Right ventricle myocardium inferior (tissue), 1 donor: ENCODE measurements at regions of chr22 and their contacts with region 1.

Region 1: DNA sequence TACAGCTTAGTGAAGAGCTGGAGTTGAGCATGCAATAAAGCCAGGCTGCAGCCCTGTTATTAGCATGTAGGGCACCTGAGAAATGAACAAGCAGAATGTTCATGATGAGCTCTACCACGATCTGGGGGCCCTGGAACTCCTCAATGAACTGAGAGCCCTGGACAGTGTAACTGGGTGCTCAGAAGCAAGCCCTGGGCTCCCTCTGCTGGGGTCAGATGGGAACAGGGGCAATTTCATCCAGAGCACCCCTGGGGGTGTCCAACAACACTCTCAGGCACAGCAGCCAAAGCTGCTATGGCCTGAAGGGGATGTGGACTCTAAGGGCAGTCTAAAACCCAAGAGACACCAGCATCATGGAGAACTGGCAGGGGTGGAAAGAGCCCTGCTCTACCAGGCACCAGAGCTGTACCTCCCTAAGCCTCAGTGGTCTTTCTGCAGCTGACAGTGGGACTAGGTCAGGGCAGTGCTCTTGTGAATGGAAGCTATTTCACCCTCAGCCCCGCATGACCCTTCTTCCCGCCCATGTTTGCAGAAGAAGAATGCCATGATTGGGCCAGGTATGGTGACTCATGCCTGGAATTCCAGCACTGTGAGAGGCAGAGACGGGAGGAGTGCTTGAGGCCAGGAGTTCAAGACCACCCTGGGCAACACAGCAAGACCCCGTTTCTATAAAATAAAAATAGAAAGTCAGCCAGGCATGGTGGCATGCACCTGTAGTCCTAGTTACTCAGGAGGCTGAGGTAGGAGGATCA is 28.9 kb downstream of the THOC5 start:
- DNase-seq: no peak
- ATAC-seq: peak; percentile 72

Region 2: DNA sequence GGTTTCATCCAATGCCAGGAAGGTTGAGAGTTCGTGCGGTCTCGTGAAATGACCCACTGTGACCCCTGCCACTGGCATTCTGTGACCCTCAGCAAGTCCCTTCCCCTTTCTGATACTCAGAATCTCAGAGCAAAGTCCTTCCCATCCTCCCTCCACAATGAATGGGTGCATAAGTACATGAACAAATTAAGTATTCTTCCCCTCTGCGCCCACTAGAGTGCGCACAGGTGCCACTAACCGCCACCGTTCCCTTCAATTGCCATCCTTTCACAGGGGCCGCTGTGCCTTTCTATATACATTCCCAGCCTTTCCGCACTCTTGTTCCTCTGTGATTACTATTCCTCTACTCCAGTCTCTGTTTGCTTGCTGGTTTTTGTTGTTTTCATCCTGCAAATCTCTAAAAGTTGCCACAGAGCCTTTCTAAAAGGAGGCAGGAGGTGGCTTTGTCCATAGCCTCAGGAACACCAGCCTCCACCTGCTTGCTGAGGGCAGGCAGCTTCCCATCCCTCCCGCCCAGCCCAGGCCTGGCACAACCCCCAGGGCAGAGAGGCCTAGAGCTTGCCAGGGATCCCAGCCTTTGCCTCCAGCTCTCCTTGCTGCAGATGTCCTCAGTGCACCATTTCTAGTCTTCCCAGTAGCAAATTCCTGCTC is 129.6 kb before region 1 on chr22:
- intact Hi-C with region 1: loop called (anchors 2 kb)
- DNase-seq: no peak
- ATAC-seq: peak; percentile 83

Region 3: GRCh38 chr22:29408945-29409344 is 115.7 kb before region 1 on chr22:
- intact Hi-C with region 1: no loop called
- DNase-seq: no peak
- ATAC-seq: no peak

Region 4: GRCh38 chr22:29647954-29648737 is 123.5 kb after region 1 on chr22:
- intact Hi-C with region 1: no loop called
- DNase-seq: no peak
- ATAC-seq: no peak